H1 (cell line): ENCODE measurements at regions of chr18 and their contacts with region 1.

Region 1: DNA sequence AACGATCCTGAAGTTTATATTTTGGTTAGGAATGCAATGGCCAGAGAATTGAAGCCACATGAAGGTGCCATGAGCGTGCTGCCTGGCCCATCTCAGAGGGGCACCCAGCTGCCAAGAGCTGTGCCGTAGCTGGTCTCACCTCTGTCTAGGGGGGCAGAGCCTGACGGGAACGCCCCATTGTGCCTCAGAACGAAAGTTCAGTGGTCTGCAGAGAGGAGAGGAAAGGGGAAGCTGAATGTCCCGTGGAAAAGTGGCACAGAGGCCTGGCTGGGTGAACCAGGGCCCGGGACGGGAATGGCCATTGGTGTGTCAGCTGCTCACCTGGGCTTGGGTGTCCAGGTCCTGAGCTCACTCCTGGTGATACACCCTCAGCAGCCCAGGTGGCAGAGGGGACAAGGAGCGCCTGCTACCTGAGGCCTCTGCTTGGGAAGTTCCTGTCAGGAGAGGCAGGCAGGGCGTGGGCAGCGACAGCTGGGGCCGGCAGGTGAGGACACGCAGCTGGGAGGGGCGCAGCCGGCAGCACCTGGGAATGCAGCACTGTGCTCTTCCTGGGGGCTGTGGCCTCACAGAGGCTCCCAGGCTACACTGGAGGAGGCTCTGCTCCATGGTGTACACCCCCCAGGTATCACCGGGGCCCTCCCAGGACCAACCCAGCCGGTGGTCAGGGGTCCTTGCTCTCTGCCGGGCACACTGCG is 67.3 kb downstream of the PARD6G start:
- DNase-seq: no peak
- H3K4me3 ChIP-seq: no peak overlapping the region
- H3K27ac ChIP-seq: no peak overlapping the region
- H3K4me1 ChIP-seq: peaks cover 0 to 10% (median 3%) of the 10 kb centered on the region in 4 experiments; a peak in 5 of 7 replicates
- H3K27me3 ChIP-seq: no peaks in the 10 kb centered on the region
- CTCF ChIP-seq: no peak
- EP300 ChIP-seq: no peak
- POLR2A ChIP-seq: no peak
- RAD21 ChIP-seq: no peak

Region 2: GRCh38 chr18:80037869-80038630 is 142.0 kb before region 1 on chr18:
- CTCF ChIA-PET with region 1: no interaction called
- POLR2A ChIA-PET with region 1: no interaction called
- DNase-seq: no peak
- H3K4me3 ChIP-seq: no peak overlapping the region
- H3K27ac ChIP-seq: no peak overlapping the region
- H3K4me1 ChIP-seq: peaks cover 0 to 9% (median 2%) of the 10 kb centered on the region in 4 experiments; a peak in 5 of 7 replicates
- H3K27me3 ChIP-seq: no peaks in the 10 kb centered on the region
- CTCF ChIP-seq: no peak
- EP300 ChIP-seq: no peak
- POLR2A ChIP-seq: no peak
- RAD21 ChIP-seq: no peak

Region 3: GRCh38 chr18:80194874-80195570 is 15.0 kb after region 1 on chr18:
- CTCF ChIA-PET with region 1: interaction called, 27 read pairs
- POLR2A ChIA-PET with region 1: interaction called, 6 read pairs
- DNase-seq: peak in 1 of 2 experiments; percentile 36
- H3K4me3 ChIP-seq: no peak overlapping the region
- H3K27ac ChIP-seq: no peak overlapping the region
- H3K4me1 ChIP-seq: peaks cover 2 to 16% (median 5%) of the 10 kb centered on the region in 4 experiments; a peak in 6 of 7 replicates
- H3K27me3 ChIP-seq: no peaks in the 10 kb centered on the region
- CTCF ChIP-seq: no peak
- EP300 ChIP-seq: no peak
- POLR2A ChIP-seq: no peak
- RAD21 ChIP-seq: no peak

Region 4: DNA sequence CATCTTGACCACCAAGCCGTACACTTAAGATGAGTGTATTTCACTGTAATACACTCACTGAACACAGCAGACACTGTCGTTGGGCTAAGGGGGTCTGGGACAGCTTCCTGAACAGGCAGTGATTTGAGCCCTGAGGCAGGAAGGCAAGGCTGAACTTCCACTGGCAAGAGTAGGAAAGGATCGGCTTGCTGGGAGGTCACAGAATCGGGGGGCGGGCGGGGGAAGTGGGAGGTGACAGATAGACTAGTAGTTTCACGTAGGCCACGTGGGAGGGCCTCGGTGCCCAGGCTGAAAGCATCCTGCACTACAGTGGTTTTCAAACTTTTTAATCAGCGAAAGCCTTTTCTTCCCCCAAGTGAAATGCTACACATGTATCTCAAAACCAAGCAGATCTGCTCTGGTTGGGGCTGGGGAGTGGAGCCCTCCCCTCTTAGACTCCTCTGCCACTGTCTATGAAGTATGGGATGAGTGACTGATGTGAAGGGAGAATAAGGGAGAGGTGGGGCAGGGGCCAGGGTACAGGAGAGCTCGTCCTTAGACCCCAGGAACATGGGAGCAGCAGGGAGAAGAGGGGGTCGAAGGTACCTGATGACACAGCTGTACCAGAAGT is 58.8 kb after region 1 on chr18:
- CTCF ChIA-PET with region 1: interaction called, 11 read pairs
- POLR2A ChIA-PET with region 1: interaction called, 3 read pairs
- DNase-seq: no peak
- H3K4me3 ChIP-seq: no peak overlapping the region
- H3K27ac ChIP-seq: no peak overlapping the region
- H3K4me1 ChIP-seq: peaks cover 0 to 4% (median 0%) of the 10 kb centered on the region in 4 experiments; a peak in 3 of 7 replicates
- H3K27me3 ChIP-seq: no peaks in the 10 kb centered on the region
- CTCF ChIP-seq: no peak
- EP300 ChIP-seq: no peak
- POLR2A ChIP-seq: no peak
- RAD21 ChIP-seq: no peak